ENCODE measurements at regions of chr15 and their contacts with region 1.

Region 1: GRCh38 chr15:32717426-32718226 is at the start of gene GREM1:
- DNase-seq: no peak
- ATAC-seq: peak in 1 of 4 donors; percentile 15
- H3K4me3 ChIP-seq: peak within 1 kb of the TSS in 11 of 12 donors; percentile 7 to 45 (median 29)
- H3K27ac ChIP-seq: peak within 1 kb of the TSS in 1 of 12 donors; percentile 12
- H3K4me1 ChIP-seq: peaks cover 0 to 31% (median 3%) of the 10 kb centered on the region in 12 donors
- H3K27me3 ChIP-seq: peaks cover 29 to 93% (median 63%) of the 10 kb centered on the region in 9 donors
- CTCF ChIP-seq: no peak
- POLR2A ChIP-seq: no peak
- total RNA-seq, gene GREM1: 0.07 to 2.3 (median 0.44) TPM in 4 of 9 donors, not detected in the others

Region 2: DNA sequence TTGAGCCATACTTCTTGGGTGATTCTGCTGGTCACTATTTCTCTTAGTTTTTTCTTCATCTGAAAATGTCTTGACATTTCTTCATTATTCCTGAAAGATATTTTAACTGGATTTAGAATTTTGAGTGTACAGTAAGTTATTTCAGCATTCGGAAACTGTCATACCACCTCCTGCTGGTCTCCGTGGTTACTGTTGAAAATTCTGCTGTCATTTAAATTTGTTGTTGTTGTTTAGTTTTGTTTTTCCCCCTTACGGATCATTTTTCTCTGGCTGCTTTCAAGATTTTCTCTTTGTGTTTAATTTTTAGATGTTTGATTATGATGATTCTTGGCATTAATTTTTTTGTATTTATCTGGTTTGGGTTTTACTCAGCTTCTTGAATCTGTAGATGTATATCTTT is 586.8 kb before region 1 on chr15:
- intact Hi-C with region 1: no loop called
- DNase-seq: no peak
- ATAC-seq: no peak
- H3K4me3 ChIP-seq: no peak overlapping the region
- H3K27ac ChIP-seq: no peak overlapping the region
- H3K4me1 ChIP-seq: no peaks in the 10 kb centered on the region
- H3K27me3 ChIP-seq: peaks cover 0 to 16% (median 0%) of the 10 kb centered on the region in 9 donors
- CTCF ChIP-seq: no peak
- POLR2A ChIP-seq: no peak

Region 3: GRCh38 chr15:32651229-32651837 is 66.3 kb before region 1 on chr15:
- intact Hi-C with region 1: loop called in 1 of 10 experiments (anchors 10 kb)
- DNase-seq: peak in 2 of 5 donors; percentile 13 to 23
- ATAC-seq: peak in 3 of 4 donors; percentile 53 to 71 (median 70)
- H3K4me3 ChIP-seq: no peak overlapping the region
- H3K27ac ChIP-seq: no peak overlapping the region
- H3K4me1 ChIP-seq: no peaks in the 10 kb centered on the region
- H3K27me3 ChIP-seq: no peaks in the 10 kb centered on the region
- CTCF ChIP-seq: peak; percentile 47 to 78 (median 65)
- POLR2A ChIP-seq: no peak

Region 4: DNA sequence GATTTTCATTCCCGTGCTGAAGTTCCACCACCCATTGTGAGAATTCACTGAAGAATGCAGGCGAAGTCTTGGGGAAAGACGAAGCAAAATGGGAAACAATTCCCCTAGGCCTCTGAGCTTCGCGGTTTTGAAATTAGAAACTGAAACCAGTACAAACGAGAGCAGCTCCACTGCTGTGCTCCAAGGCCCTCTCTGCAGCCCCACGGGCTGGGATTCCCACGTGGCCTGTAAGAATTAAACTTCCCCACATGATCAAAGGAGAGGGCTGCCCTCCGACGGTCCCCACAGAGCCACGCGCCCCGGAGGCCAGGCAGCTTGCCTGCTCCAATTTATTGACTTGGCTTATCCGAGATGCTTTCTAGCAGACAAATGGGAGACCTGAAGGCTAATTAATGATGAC is 144.1 kb after region 1 on chr15:
- intact Hi-C with region 1: no loop called
- DNase-seq: peak in 2 of 5 donors; percentile 8 to 62
- ATAC-seq: peak in 3 of 4 donors; percentile 45 to 65 (median 57)
- H3K4me3 ChIP-seq: peak overlapping the region in 6 of 12 donors; percentile 12 to 44 (median 26)
- H3K27ac ChIP-seq: peak overlapping the region in 5 of 12 donors; percentile 1 to 35 (median 29)
- H3K4me1 ChIP-seq: peaks cover 0 to 17% (median 0%) of the 10 kb centered on the region in 12 donors
- H3K27me3 ChIP-seq: no peaks in the 10 kb centered on the region
- CTCF ChIP-seq: no peak
- POLR2A ChIP-seq: no peak

Region 5: DNA sequence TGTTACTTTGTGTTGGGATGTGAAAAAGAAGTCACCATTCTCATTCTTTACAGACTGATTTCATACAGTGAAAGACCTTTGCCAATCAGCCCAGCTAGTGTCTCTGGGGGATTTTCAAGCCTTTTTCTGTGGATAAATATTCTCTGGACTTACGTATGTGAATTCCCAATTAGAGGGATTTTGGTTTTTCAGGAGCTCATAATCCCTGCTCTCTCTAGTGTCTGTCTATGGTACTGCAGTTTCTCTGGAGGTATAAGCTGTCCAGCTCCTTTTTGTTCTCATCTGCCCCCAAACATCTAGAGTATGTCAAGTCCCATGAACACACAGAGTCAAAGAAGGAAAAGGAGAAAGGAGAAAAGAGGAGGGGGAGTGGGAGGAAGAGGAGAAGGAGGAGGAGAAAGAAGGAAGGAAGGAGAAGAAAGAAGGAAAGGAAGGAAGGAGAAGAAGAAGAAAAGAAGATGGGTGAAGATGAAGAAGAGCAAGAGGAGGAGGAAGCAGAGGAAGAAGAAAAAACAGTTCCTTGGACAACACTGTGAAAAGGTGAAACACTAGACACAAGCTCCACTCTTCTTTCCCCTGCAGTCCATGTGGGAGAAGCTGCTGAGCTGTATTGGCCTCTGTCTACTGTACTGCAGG is 218.8 kb after region 1 on chr15:
- intact Hi-C with region 1: no loop called
- DNase-seq: no peak
- ATAC-seq: peak in 1 of 4 donors; percentile 41
- H3K4me3 ChIP-seq: no peak overlapping the region
- H3K27ac ChIP-seq: no peak overlapping the region
- H3K4me1 ChIP-seq: no peaks in the 10 kb centered on the region
- H3K27me3 ChIP-seq: no peaks in the 10 kb centered on the region
- CTCF ChIP-seq: peak in 10 of 12 donors; percentile 20 to 57 (median 42)
- POLR2A ChIP-seq: no peak

Region 6: GRCh38 chr15:33159726-33160453 is 442.3 kb after region 1 on chr15:
- intact Hi-C with region 1: loop called in 1 of 10 experiments (anchors 10 kb)
- DNase-seq: no peak
- ATAC-seq: peak in 1 of 4 donors; percentile 7
- H3K4me3 ChIP-seq: no peak overlapping the region
- H3K27ac ChIP-seq: peak overlapping the region in 10 of 12 donors; percentile 7 to 82 (median 56)
- H3K4me1 ChIP-seq: peaks cover 0 to 57% (median 8%) of the 10 kb centered on the region in 12 donors
- H3K27me3 ChIP-seq: no peaks in the 10 kb centered on the region
- CTCF ChIP-seq: no peak
- POLR2A ChIP-seq: no peak